ENCODE measurements at regions of chr5 and their contacts with region 1.

Region 1: DNA sequence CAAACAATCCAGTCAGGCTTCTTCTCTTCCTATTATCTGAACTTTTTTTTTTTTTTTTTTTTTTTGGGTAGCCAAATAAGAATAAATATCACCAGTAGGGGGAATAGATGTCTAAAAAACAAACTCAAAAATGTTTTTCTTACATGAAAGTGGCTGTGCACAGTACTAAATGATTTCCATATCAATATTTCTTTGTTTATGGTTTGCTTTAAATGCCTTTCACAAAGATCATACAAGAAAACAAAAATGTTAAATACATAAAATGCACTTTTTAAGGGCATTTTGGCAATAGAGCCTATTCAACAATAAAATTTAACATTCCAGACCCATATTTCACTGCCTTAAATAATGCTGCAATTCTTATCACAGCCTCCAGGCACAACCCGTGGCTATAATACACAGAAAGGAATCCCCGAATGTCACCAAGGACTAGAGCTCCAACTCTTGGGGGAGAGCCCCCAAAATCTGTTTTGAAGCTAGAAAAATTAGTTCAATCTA is 91.1 kb upstream of the TBCA start:
- DNase-seq: peak; percentile 25
- ATAC-seq: peak; percentile 70
- H3K4me3 ChIP-seq: no peak overlapping the region
- H3K27ac ChIP-seq: no peak overlapping the region
- H3K4me1 ChIP-seq: no peaks in the 10 kb centered on the region
- H3K27me3 ChIP-seq: no peaks in the 10 kb centered on the region
- CTCF ChIP-seq: peak; percentile 49; the same call in 1 of the 2 replicates

Region 2: GRCh38 chr5:77560677-77561263 is 306.5 kb before region 1 on chr5:
- CTCF ChIA-PET with region 1: interaction called, 3 read pairs
- POLR2A ChIA-PET with region 1: no interaction called
- intact Hi-C with region 1: loop called (anchors 1 kb)
- DNase-seq: peak; percentile 58
- ATAC-seq: peak; percentile 54; the same call in 1 of the 2 replicates
- H3K4me3 ChIP-seq: no peak overlapping the region
- H3K27ac ChIP-seq: no peak overlapping the region
- H3K4me1 ChIP-seq: no peaks in the 10 kb centered on the region
- H3K27me3 ChIP-seq: peaks cover 6% of the 10 kb centered on the region; the same call in 1 of the 2 replicates
- CTCF ChIP-seq: peak; percentile 64

Region 3: DNA sequence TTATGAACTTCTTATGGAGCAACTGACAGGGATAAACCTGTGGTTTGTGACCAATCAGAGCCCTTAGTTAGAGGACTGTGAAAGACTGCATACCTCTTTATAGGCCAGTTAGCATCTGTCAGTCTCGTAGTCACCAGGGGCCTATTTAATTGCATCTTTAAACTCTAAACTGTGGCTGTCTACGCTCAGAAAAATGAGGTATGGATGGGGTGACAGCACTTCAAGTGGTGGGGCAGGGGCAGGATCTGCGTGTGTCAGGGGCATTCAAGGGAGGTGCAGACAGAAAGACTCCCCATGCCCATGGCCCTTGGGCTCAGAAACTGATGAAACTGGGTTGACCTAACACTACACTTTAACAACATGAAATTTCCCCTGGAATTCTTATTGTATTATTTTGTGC is 41.5 kb after region 1 on chr5:
- CTCF ChIA-PET with region 1: no interaction called
- POLR2A ChIA-PET with region 1: no interaction called
- intact Hi-C with region 1: no loop called
- DNase-seq: no peak
- ATAC-seq: no peak
- H3K4me3 ChIP-seq: no peak overlapping the region
- H3K27ac ChIP-seq: no peak overlapping the region
- H3K4me1 ChIP-seq: no peaks in the 10 kb centered on the region
- H3K27me3 ChIP-seq: no peaks in the 10 kb centered on the region
- CTCF ChIP-seq: no peak

Region 4: DNA sequence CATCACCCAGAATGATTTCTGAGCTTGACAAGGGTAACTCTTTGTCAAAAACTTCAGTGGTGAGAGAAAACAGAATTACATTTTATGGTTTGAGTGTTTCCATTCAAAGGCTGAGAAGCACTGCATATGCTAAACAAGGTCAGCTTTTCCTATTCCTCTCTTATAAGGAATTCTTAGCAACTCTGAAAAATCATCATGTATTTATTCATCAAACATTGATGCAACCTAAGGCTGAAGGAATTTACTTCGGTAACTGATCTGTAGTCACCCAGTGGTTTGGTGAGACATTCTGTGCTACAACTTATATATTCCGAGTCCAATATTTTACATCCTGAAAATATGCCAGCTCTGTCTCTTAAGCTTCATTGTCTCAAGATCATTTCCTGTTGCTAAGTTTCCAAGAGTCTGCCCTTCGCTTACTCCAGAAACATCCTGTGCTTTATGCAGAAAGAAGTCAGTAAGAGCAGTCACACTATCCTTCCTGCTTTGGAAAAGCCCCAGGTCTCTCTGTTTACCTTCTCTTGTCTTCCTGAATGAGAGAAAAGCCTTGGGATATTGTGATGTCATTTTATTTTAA is 85.5 kb after region 1 on chr5:
- CTCF ChIA-PET with region 1: no interaction called
- POLR2A ChIA-PET with region 1: no interaction called
- intact Hi-C with region 1: loop called (anchors 2 kb)
- DNase-seq: peak; percentile 55
- ATAC-seq: peak; percentile 97
- H3K4me3 ChIP-seq: no peak overlapping the region
- H3K27ac ChIP-seq: no peak overlapping the region
- H3K4me1 ChIP-seq: peaks cover 5% of the 10 kb centered on the region; the same call in 1 of the 2 replicates
- H3K27me3 ChIP-seq: no peaks in the 10 kb centered on the region
- CTCF ChIP-seq: no peak

Region 5: GRCh38 chr5:78008356-78008967 is 141.2 kb after region 1 on chr5:
- CTCF ChIA-PET with region 1: interaction called, 3 read pairs
- POLR2A ChIA-PET with region 1: no interaction called
- intact Hi-C with region 1: loop called (anchors 1 kb)
- DNase-seq: peak; percentile 56
- ATAC-seq: peak; percentile 55
- H3K4me3 ChIP-seq: no peak overlapping the region
- H3K27ac ChIP-seq: no peak overlapping the region
- H3K4me1 ChIP-seq: no peaks in the 10 kb centered on the region
- H3K27me3 ChIP-seq: no peaks in the 10 kb centered on the region
- CTCF ChIP-seq: peak; percentile 78

Region 6: DNA sequence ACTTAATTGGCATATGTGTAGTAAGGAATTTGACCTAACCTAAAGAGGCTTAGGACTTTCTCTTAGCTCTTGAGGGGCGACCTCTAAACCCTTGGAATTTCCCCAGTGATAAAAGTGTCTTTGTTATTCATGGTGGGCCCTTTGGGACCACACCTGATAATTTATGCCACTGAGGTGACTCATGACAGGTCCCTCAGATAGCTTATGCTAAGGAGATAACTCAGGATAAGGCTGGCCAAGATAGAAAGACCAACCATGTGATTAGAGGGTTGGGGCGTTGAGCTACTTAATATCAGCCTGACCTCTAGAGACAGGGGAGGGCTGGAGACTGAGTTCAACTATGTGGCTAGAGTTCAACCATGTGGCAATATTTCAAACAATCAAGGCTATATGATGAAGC is 209.1 kb after region 1 on chr5:
- CTCF ChIA-PET with region 1: no interaction called
- POLR2A ChIA-PET with region 1: no interaction called
- intact Hi-C with region 1: no loop called
- DNase-seq: no peak
- ATAC-seq: no peak
- H3K4me3 ChIP-seq: no peak overlapping the region
- H3K27ac ChIP-seq: no peak overlapping the region
- H3K4me1 ChIP-seq: no peaks in the 10 kb centered on the region
- H3K27me3 ChIP-seq: no peaks in the 10 kb centered on the region
- CTCF ChIP-seq: no peak

Region 7: GRCh38 chr5:78269088-78269703 is 402.0 kb after region 1 on chr5:
- CTCF ChIA-PET with region 1: no interaction called
- POLR2A ChIA-PET with region 1: no interaction called
- intact Hi-C with region 1: loop called (anchors 10 kb)
- DNase-seq: peak; percentile 34
- ATAC-seq: peak; percentile 43; the same call in 1 of the 2 replicates
- H3K4me3 ChIP-seq: no peak overlapping the region
- H3K27ac ChIP-seq: no peak overlapping the region
- H3K4me1 ChIP-seq: no peaks in the 10 kb centered on the region
- H3K27me3 ChIP-seq: no peaks in the 10 kb centered on the region
- CTCF ChIP-seq: peak; percentile 57